Tibial artery (tissue), 4 donors: ENCODE measurements at regions of chr6 and their contacts with region 1.

Region 1: DNA sequence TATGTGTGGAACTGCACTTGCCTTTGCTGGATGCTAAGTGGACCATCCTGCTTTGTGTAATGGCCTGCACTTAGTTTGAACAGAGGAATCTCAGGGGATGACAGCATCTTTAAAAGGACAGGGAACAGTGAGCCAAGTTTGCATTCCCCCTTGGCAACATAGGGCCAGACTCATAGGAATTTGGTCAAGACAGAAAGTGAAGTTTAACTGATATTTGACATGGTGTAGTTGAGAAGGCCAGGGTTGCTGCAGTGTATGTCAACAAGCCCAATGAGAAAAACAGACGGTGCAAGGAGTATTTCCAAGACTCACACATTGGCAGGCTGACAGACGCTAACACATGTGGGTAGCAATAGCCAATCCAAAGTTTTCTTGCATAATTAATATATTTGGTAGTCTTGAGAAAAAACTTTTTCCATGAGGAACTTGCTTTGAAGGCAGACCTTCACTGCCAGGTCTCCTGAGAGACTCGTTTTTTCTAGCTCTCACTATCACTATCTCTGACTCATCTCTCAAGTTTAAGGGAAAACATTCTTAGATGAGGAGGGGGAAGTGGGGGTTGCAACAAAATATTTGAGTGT is 213.8 kb downstream of the IBTK start:
- DNase-seq: peak; percentile 64 to 77
- H3K4me3 ChIP-seq: no peak overlapping the region
- H3K27ac ChIP-seq: peak overlapping the region; percentile 47 to 50
- H3K4me1 ChIP-seq: peaks cover 0 to 40% (median 22%) of the 10 kb centered on the region in 4 donors
- H3K27me3 ChIP-seq: no peaks in the 10 kb centered on the region
- CTCF ChIP-seq: no peak

Region 2: DNA sequence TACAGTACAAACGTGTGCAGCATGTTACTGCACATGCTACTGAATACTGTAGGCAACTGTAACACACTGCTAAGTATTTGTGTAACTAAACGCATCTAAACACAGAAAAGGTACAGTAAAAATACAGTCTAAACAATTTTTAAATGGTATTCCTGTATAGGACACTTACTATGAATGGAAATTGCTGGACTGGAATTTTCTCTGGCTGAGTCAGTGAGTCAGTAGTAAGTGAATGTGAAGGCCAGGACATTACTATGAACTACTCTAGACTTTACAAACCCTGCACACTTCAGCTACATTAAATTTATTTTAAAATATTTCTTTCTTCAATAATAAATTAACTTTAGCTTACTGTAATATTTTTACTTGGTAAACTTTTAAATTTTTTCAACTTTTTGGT is 56.2 kb before region 1 on chr6:
- intact Hi-C with region 1: no loop called
- DNase-seq: no peak
- H3K4me3 ChIP-seq: no peak overlapping the region
- H3K27ac ChIP-seq: no peak overlapping the region
- H3K4me1 ChIP-seq: peaks cover 0 to 10% (median 4%) of the 10 kb centered on the region in 4 donors
- H3K27me3 ChIP-seq: no peaks in the 10 kb centered on the region
- CTCF ChIP-seq: no peak

Region 3: DNA sequence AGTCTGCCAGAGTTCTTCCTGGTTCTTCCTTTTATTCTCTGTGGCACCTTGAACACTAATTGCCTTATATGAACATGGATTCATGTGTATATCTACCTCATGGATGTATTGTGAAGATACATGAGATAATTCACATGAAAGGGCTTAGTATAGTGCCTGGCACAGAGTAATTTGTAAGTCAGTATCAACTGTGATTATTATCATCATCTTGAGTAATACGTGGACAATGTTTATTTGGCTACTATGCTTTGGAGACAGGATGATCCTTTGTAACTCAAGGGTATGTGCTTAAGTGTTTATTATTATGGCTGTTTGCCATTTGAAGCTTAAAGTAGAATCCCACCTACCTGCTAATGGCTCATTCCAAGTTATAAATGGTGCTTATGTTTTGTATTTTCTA is 1049.8 kb after region 1 on chr6:
- intact Hi-C with region 1: loop called (anchors 5 kb)
- DNase-seq: no peak
- H3K4me3 ChIP-seq: no peak overlapping the region
- H3K27ac ChIP-seq: no peak overlapping the region
- H3K4me1 ChIP-seq: no peaks in the 10 kb centered on the region
- H3K27me3 ChIP-seq: no peaks in the 10 kb centered on the region
- CTCF ChIP-seq: no peak